ENCODE measurements at regions of chr7 and their contacts with region 1.

Region 1: DNA sequence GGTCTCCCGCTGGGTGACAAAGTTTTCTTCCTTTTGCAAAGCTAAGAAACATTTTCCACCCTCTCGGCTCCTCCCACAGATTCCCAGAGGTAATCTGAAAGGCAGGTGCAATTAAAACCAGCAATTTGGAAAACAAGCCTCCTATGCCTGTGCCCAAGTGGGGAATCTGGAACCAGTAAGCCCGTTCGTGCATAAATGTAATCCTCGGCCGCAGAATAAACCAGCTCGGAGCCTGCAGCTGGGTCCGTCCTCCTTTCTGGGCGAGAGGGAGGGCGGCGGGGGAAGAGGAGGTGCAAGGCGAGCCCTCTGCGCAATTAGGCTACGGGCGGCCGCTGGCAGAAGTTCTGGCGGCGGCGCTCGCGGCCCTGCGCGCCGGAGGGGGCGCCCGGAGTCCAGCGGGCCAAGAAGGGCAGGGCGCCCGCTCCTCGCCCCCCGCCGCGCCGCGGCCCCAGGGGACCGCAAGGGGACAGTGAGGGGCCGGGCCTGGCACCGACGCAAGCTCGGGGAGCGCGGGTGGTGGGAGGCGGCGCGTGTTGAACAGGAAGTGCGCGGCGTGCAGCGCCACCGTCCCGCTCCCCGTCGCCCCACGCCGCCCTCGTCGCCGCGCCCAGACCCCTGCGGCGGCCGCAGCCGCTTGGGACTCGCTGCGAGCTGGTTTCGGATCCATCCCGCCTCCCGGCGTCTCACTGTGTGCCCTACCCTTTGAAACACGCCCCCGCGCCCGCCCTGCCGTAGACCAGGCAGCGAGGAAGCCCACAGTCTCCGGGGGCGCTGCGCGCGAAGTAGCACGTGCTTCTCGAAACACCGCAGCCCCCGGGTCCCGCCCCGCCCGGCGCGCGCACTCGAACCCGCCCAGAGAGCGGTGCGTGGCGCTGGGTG is at the start of gene PRKAG2:
- DNase-seq: no peak
- H3K4me3 ChIP-seq: peak within 1 kb of the TSS; percentile 70 to 95 (median 83)
- H3K27ac ChIP-seq: peak within 1 kb of the TSS; percentile 81 to 85 (median 82)
- H3K4me1 ChIP-seq: peaks cover 15 to 39% (median 31%) of the 10 kb centered on the region in 4 donors
- H3K27me3 ChIP-seq: peaks cover 0 to 3% (median 0%) of the 10 kb centered on the region in 4 donors
- CTCF ChIP-seq: peak in 2 of 3 experiments; percentile 2 to 20
- EP300 ChIP-seq: no peak
- POLR2A ChIP-seq: no peak
- total RNA-seq, gene PRKAG2: 51.3 to 97.2 (median 77.5) TPM

Region 2: DNA sequence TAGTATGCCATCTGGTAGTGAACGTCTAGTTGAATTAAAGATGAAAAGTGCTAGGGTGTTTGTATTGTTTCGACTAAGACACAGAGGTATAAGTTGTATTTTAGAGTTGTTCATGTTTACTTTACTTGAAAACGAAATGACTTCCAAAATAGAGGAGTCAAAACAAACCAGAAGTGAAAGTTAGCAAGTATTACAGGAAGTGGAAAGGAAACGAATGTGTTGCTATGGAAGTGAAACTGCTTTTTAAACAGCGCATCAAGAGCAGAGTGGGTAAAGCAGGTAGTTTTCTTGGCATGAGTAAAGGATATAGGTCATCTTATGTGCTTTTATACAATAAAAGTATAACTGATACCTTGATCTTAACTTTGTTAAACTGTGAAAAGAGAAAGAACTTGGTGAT is 59.1 kb after region 1 on chr7:
- intact Hi-C with region 1: loop called (anchors 5 kb)
- DNase-seq: no peak
- H3K4me3 ChIP-seq: no peak overlapping the region
- H3K27ac ChIP-seq: peak overlapping the region in 1 of 4 donors; percentile 38
- H3K4me1 ChIP-seq: peaks cover 0 to 18% (median 7%) of the 10 kb centered on the region in 4 donors
- H3K27me3 ChIP-seq: peaks cover 0 to 5% (median 0%) of the 10 kb centered on the region in 4 donors
- CTCF ChIP-seq: no peak
- EP300 ChIP-seq: no peak
- POLR2A ChIP-seq: no peak

Region 3: DNA sequence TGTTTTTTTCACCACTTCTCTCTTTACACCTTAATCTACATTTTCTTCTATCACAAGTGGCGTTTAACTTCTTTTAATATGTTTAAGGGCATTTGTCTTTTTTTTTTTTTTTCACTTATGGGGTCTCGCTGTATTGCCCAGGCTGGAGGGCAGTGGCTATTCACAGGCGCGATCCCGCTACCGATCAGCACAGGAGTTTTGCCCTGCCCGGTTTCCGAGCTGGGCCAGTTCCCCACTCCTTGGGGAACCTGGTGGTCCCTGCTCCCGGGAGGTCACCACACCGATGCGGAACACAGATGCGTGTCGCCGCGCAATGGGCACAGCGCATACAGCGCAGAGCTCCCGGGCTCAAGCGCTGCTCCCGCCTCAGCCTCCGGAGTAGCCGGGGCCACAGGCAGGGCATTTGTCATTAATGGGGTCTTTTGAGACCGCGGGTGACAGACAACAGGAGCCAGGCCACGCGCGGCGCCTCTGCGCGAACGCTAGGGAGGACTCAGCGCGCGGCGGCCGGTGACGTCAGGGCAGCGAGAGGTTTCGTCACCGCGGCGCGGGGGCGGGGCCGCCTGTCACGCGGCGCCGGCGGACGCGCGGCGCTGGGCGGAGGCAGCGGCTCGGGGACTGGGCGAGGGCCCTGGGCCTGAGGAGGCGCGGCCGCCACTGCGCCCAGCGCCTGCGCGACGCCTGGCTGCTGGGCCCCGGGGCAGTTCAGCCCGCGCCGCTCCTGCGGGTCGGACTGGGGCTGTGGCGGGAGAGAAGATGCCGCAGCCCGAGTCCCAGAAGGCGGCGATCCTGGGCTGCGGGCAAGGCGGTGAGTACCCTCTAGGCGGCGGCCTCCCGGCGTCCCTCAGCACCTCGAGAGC is 148.2 kb after region 1 on chr7 and contains the start of gene GALNT11:
- intact Hi-C with region 1: loop called (anchors 10 kb)
- DNase-seq: peak; percentile 95
- H3K4me3 ChIP-seq: peak within 1 kb of the TSS; percentile 72 to 88 (median 80)
- H3K27ac ChIP-seq: peak within 1 kb of the TSS; percentile 86 to 95 (median 92)
- H3K4me1 ChIP-seq: peaks cover 9 to 44% (median 17%) of the 10 kb centered on the region in 4 donors
- H3K27me3 ChIP-seq: no peaks in the 10 kb centered on the region
- CTCF ChIP-seq: peak in 2 of 3 experiments; percentile 33 to 40
- EP300 ChIP-seq: no peak
- POLR2A ChIP-seq: no peak
- total RNA-seq, gene GALNT11: 33.2 to 51.8 (median 39.5) TPM